ENCODE measurements at regions of chr17 and their contacts with region 1.

Region 1: GRCh38 chr17:40602775-40603551 is 37.7 kb upstream of the CCR7 start:
- DNase-seq: peak; percentile 82
- H3K4me3 Mint-ChIP-seq: peak overlapping the region; percentile 69
- H3K27ac Mint-ChIP-seq: peak overlapping the region; percentile 98
- H3K4me1 Mint-ChIP-seq: peaks cover 98% of the 10 kb centered on the region
- H3K27me3 Mint-ChIP-seq: no peaks in the 10 kb centered on the region

Region 2: DNA sequence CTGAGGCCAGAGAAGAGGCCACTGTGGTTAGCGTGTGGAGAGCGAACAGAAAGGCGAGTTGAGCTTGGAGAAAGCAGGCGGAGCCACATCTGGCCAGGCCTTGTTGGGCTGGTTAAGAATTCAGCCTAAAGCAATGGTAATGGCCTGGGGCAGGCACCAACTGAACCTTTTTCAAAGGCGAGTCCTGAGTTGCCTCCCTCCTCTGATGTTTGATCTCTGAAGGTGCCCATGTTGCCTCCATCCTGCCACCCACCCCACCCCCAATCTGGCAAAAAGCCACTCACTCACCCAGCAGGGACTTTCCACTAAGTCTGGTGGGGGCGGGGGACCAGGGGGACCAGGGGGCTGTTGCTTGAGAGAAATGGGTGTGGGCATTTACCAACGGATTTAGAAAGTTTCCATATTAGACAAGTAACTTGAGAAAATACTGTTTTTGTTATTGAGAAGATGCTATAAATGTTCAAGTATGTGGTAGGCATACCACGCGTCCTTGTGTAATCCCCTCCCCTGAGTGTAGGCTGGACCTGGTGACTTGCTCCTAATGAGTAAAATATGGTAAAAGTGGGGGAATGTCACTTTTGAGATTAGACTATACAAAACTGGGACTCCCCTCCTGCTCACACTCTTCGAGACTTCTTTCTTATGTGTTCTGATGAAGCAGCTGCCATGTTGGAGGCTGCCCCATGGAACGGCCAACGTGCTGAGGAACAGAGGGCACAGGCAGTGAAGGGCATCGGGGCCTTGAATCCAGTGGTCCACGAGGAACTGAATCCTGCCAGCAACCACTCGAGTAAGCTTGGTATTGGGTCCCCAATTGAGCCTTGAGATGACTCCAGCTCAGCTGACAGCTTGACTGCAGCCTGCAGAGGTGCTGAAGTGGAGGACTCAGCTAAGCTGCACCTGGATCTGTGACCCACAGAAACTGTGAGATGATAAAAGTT is 71.6 kb before region 1 on chr17:
- CTCF ChIA-PET with region 1: no interaction called
- POLR2A ChIA-PET with region 1: no interaction called
- DNase-seq: peak; percentile 59
- H3K4me3 Mint-ChIP-seq: peak overlapping the region; percentile 11
- H3K27ac Mint-ChIP-seq: peak overlapping the region; percentile 90
- H3K4me1 Mint-ChIP-seq: peaks cover 88% of the 10 kb centered on the region
- H3K27me3 Mint-ChIP-seq: peaks cover 2% of the 10 kb centered on the region

Region 3: DNA sequence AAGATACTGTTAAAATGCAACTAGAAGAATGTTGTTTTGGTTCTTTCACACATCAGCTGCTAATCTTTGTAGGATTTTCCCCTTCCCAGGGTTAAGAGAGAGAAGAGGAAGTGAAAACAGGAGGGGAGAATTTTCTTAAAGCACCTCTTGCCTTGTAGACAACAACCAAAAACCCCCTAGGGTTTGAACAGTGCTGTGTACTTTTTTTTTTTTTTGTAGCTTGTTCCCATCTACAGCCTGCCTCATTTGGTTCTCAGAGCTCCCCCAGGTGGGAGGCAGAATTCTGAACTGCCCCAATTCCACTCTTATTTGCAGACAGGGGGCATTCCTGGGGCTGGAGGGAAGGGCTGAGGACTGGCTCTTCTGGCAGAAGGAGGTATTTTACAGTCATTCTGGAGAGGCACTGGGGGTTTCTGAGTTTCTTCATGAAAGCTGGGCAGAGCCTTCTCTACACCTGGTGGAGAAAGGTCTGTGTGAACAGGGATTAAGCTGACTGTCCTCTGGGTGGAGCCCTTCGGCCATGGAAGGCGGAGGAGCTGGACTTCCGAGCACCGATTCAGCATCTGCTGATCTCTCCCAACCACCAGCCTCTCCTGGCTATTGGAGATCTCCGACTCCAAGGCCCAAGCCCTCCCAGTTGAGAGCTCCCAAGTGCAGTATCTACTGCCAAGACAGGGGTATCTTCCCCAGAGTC is 12.5 kb after region 1 on chr17:
- CTCF ChIA-PET with region 1: interaction called, 11 read pairs
- POLR2A ChIA-PET with region 1: no interaction called
- DNase-seq: peak; percentile 53
- H3K4me3 Mint-ChIP-seq: peak overlapping the region; percentile 33
- H3K27ac Mint-ChIP-seq: peak overlapping the region; percentile 88
- H3K4me1 Mint-ChIP-seq: peaks cover 90% of the 10 kb centered on the region
- H3K27me3 Mint-ChIP-seq: no peaks in the 10 kb centered on the region